ENCODE measurements at regions of chr12 and their contacts with region 1.

Region 1: DNA sequence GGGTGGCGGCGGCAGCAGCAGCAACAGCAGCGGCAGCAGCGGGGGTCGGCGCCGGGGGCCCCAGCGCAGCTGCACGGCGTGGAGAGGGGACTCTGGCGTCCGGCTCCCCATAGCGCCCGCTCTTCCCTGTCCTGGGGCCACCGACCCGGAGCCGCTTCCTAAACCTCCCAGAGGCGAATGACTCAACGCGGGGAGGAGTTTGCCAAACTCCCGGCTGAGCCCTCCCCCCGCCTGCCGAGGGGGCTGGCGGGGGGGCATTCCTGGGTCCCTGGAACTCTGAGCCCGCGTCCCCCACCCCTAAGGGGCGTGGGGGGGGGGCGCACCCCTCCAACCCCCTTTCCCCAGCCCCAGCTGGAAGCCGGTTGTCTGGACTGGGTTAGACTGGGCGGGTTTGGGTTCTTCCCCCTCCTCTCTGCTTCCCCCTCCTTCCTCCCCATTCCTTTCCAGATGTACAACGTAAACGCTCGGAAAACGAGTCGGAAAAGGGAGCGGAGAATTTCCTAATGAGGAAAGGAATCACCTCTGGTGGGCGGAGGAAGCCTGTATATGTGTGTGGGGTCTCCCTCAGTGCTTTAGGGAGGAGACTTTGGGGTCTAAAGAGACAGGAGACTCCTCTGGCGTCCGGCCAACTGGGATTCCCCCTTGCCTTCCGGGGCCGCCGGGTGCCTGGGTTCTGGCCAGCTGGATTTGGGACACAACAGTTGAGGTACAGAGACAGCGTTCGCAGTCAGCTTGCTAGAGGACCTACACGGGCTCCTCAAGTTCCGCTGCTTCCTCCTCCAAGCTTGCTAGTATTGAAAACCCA is at the start of gene ITGA5:
- DNase-seq: peak in 1 of 2 experiments; percentile 76
- H3K4me3 ChIP-seq: peak within 1 kb of the TSS; percentile 67 to 92 (median 76)
- H3K27ac ChIP-seq: no peak within 1 kb of the TSS
- H3K4me1 ChIP-seq: peaks cover 6 to 16% (median 9%) of the 10 kb centered on the region in 4 experiments
- H3K27me3 ChIP-seq: peaks cover 0 to 22% (median 18%) of the 10 kb centered on the region in 4 experiments; a peak in 6 of 7 replicates
- CTCF ChIP-seq: no peak
- EP300 ChIP-seq: no peak
- POLR2A ChIP-seq: no peak
- RAD21 ChIP-seq: no peak
- total RNA-seq, gene ITGA5: 19.0 and 19.4 TPM in 2 replicates

Region 2: GRCh38 chr12:54337280-54337842 is 81.9 kb before region 1 on chr12:
- CTCF ChIA-PET with region 1: no interaction called
- POLR2A ChIA-PET with region 1: no interaction called
- DNase-seq: no peak
- H3K4me3 ChIP-seq: no peak overlapping the region
- H3K27ac ChIP-seq: no peak overlapping the region
- H3K4me1 ChIP-seq: no peaks in the 10 kb centered on the region
- H3K27me3 ChIP-seq: no peaks in the 10 kb centered on the region
- CTCF ChIP-seq: no peak
- EP300 ChIP-seq: no peak
- POLR2A ChIP-seq: no peak
- RAD21 ChIP-seq: peak in 1 of 2 experiments; percentile 26; a peak in 1 of 4 replicates

Region 3: GRCh38 chr12:54359033-54359761 is 60.1 kb before region 1 on chr12:
- CTCF ChIA-PET with region 1: no interaction called
- POLR2A ChIA-PET with region 1: no interaction called
- DNase-seq: peak; percentile 89 to 98
- H3K4me3 ChIP-seq: peak overlapping the region; percentile 57 to 78 (median 74)
- H3K27ac ChIP-seq: peak overlapping the region; percentile 35; the same call in 1 of the 2 replicates
- H3K4me1 ChIP-seq: peaks cover 16 to 38% (median 20%) of the 10 kb centered on the region in 4 experiments
- H3K27me3 ChIP-seq: no peaks in the 10 kb centered on the region; a peak in 1 of 7 replicates
- CTCF ChIP-seq: no peak
- EP300 ChIP-seq: no peak; a peak in 1 of 3 replicates
- POLR2A ChIP-seq: 0 out of 3 replicates have a peak, but pooled peaks of 1 of the 2 experiments have one; percentile 8
- RAD21 ChIP-seq: no peak

Region 4: GRCh38 chr12:54431911-54432814 is 12.9 kb after region 1 on chr12:
- CTCF ChIA-PET with region 1: interaction called, 121 read pairs
- POLR2A ChIA-PET with region 1: interaction called, 7 read pairs
- DNase-seq: no peak
- H3K4me3 ChIP-seq: peak overlapping the region in 2 of 4 experiments; percentile 23 to 26; a peak in 3 of 8 replicates
- H3K27ac ChIP-seq: no peak overlapping the region
- H3K4me1 ChIP-seq: peaks cover 0 to 16% (median 11%) of the 10 kb centered on the region in 4 experiments; a peak in 6 of 7 replicates
- H3K27me3 ChIP-seq: peaks cover 3 to 41% (median 29%) of the 10 kb centered on the region in 4 experiments
- CTCF ChIP-seq: no peak
- EP300 ChIP-seq: no peak
- POLR2A ChIP-seq: no peak
- RAD21 ChIP-seq: no peak

Measured in H1 (cell line).